Motor neuron (in vitro differentiated cells): ENCODE measurements at regions of chr5 and their contacts with region 1.

Region 1: GRCh38 chr5:157142317-157143126 is at the start of gene MED7:
- ATAC-seq: peak; percentile 95 to 100 (median 100)
- H3K4me3 ChIP-seq: peak within 1 kb of the TSS; percentile 74 to 100 (median 86)
- H3K27ac ChIP-seq: peak within 1 kb of the TSS; percentile 81 to 92
- H3K4me1 ChIP-seq: peaks cover 6 to 10% of the 10 kb centered on the region in 2 donors
- total RNA-seq, gene MED7: 10.7 to 20.8 (median 15.4) TPM

Region 2: DNA sequence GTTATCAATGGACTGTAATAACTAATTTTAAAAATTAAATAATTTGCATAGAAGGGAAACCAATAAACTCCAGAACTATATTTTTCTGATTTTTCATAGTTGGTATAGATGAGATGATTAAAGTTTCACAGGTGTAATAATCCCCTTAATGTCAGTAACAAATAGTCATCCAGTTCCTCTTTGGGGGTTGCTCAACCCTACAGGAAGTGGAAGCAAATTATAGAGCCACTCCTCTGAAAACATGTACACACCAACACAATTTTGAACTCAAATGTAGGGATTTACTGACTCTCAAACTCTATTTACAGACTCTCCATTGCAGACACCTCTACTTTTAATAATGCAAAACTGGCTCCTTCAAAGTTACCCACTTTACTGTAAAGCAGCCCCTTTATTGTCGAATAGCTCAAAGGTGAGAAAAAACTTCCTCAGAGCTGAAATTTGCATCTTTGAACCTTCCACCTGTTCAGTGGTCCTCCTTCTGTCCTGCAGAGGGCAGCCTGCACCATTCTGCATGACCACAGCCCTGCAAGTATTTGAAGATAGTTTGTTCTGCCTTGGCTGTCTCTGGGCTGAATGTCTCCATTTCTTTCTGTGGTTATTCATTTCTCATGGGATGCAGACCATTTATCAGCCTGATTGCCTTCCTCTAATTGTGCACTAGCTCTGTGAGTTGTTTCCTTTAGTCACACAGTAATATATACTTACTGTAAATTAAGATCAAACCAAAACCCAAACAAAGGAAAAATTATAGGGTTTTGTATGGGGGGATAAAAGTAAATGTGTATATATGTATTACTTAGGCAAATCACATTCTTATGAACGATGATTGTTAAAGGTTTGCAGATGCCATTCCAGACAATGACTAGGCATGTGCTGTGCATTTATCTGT is 1198.8 kb before region 1 on chr5:
- in situ Hi-C with region 1: loop called in 1 of 9 experiments (anchors 25 kb)
- ATAC-seq: peak; percentile 73 to 94 (median 87)
- H3K4me3 ChIP-seq: no peak overlapping the region
- H3K27ac ChIP-seq: no peak overlapping the region
- H3K4me1 ChIP-seq: peaks cover 0 to 4% of the 10 kb centered on the region in 2 donors

Region 3: GRCh38 chr5:157743163-157744050 is 600.9 kb after region 1 on chr5 and contains the start of gene LSM11:
- in situ Hi-C with region 1: loop called in 1 of 9 experiments (anchors 25 kb)
- ATAC-seq: peak; percentile 74 to 93 (median 90)
- H3K4me3 ChIP-seq: peak within 1 kb of the TSS; percentile 59 to 88 (median 79)
- H3K27ac ChIP-seq: peak within 1 kb of the TSS; percentile 18 to 45
- H3K4me1 ChIP-seq: peaks cover 0 to 6% of the 10 kb centered on the region in 2 donors
- total RNA-seq, gene LSM11: 2.0 to 22.2 (median 11.4) TPM